Posterior vena cava (tissue), 2 donors: ENCODE measurements at regions of chr2 and their contacts with region 1.

Region 1: GRCh38 chr2:191311628-191312027 is 66.4 kb downstream of the MYO1B start:
- DNase-seq: no peak

Region 2: DNA sequence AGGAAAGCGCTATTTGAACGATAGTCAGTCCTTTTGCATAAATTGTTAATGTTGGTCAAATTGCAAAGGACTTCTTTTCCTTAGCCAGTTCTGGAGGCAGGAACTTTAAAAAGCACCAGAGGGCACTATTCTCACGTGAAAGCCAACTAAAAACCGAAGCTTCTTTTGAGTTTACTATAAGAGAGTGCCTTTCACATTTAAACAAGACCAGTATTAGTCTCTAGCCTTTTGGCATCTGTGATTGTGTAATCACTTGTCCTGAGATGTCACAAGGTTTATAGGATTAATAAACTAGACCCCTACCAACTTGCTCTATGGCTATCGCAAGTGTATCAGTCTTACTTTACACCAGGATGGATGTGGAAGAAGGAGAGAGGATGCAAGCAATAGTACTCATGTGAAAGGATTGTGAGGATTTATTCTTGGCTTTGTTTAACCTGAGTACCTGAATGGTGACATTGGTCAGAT is 146.4 kb before region 1 on chr2:
- intact Hi-C with region 1: no loop called
- DNase-seq: no peak

Region 3: GRCh38 chr2:191389288-191389687 is 77.7 kb after region 1 on chr2:
- intact Hi-C with region 1: loop called in 1 of 2 experiments (anchors 2 kb)
- DNase-seq: no peak